ENCODE measurements at regions of chr19 and their contacts with region 1.

Region 1: DNA sequence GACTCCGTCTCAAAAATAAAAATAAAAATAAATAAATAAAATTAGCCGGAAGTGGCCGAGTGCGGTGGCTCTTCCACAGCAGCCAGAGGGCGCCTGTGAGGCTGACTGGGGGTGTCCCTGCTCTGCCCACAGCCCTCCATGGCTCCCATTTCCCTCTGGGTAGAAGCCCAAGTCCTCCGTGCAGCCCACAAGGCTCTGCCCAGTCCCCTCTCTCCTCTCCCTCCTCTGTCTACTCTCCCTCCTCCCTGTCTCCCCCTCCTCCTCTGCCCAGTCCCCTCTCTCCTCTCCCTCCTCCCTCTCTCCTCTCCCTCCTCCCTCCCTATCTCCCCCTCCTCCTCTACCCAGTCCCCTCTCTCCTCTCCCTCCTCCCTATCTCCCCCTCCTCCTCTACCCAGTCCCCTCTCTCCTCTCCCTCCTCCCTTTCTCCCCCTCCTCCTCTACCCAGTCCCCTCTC is 20.4 kb downstream of the MISP start:
- DNase-seq: peak; percentile 49 to 69 (median 51)
- H3K4me3 ChIP-seq: no peak overlapping the region
- H3K4me3 Mint-ChIP-seq: no peak overlapping the region
- H3K27ac ChIP-seq: no peak overlapping the region
- H3K27ac Mint-ChIP-seq: no peak overlapping the region
- H3K4me1 ChIP-seq: peaks cover 0 to 3% of the 10 kb centered on the region in 2 donors
- H3K4me1 Mint-ChIP-seq: peaks cover 4% of the 10 kb centered on the region
- H3K27me3 ChIP-seq: no peaks in the 10 kb centered on the region
- H3K27me3 Mint-ChIP-seq: peaks cover 4 to 15% (median 14%) of the 10 kb centered on the region in 3 donors
- CTCF ChIP-seq: peak; percentile 68

Region 2: DNA sequence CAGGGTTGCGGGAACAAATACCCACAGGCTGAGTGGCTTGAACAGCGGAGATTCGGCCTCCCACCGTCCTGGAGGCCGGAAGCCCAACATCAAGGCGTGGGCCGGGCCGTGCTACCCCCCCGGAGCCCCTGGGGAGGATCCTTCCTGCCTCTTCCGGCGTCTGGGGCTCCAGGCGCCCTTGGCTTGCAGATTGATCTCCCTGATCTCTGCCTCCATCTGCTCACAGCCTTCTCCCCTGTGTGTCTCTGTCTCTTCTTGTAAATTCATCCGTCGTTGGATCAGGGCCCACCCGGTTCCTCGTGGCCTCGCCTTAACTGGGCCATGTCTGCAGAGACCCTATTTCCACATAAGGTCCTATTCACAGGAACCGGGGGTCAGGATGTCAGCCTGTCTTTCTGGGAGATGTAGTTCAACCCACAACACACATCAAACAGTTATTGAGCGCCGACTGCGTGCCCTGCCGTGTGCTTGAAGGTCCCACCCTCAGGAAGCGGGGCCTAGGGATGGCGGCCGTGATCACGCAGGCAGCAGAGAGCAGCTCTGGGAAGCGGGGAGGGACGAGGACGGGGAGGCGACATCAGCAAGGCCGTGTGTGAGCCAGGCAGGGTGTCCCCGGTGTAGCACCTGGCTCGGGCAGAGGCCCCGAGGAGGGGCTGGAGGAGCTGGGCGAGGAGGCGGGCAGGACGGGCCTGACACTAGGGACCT is 160.4 kb before region 1 on chr19:
- intact Hi-C with region 1: no loop called
- DNase-seq: no peak
- H3K4me3 ChIP-seq: peak overlapping the region; percentile 7 to 59 (median 36)
- H3K4me3 Mint-ChIP-seq: peak overlapping the region; percentile 67 to 84
- H3K27ac ChIP-seq: no peak overlapping the region
- H3K27ac Mint-ChIP-seq: peak overlapping the region in 3 of 7 donors; percentile 58 to 85 (median 84)
- H3K4me1 ChIP-seq: peaks cover 30 to 37% of the 10 kb centered on the region in 2 donors
- H3K4me1 Mint-ChIP-seq: peaks cover 21% of the 10 kb centered on the region
- H3K27me3 ChIP-seq: peaks cover 0 to 34% of the 10 kb centered on the region in 2 donors
- H3K27me3 Mint-ChIP-seq: peaks cover 25 to 58% (median 26%) of the 10 kb centered on the region in 3 donors
- CTCF ChIP-seq: no peak

Region 3: GRCh38 chr19:850221-850978 is 79.0 kb after region 1 on chr19:
- intact Hi-C with region 1: loop called in 1 of 2 experiments (anchors 5 kb)
- DNase-seq: peak in 2 of 3 donors; percentile 47 to 49
- H3K4me3 ChIP-seq: peak overlapping the region in 2 of 3 experiments; percentile 7 to 60
- H3K4me3 Mint-ChIP-seq: peak overlapping the region; percentile 52 to 59
- H3K27ac ChIP-seq: no peak overlapping the region
- H3K27ac Mint-ChIP-seq: peak overlapping the region in 2 of 7 donors; percentile 75 to 82
- H3K4me1 ChIP-seq: peaks cover 38 to 54% of the 10 kb centered on the region in 2 donors
- H3K4me1 Mint-ChIP-seq: peaks cover 50% of the 10 kb centered on the region
- H3K27me3 ChIP-seq: peaks cover 0 to 22% of the 10 kb centered on the region in 2 donors
- H3K27me3 Mint-ChIP-seq: peaks cover 20 to 43% (median 31%) of the 10 kb centered on the region in 3 donors
- CTCF ChIP-seq: no peak

Region 4: GRCh38 chr19:920051-920864 is 148.9 kb after region 1 on chr19:
- intact Hi-C with region 1: loop called (anchors 2 kb)
- DNase-seq: peak in 2 of 3 donors; percentile 28 to 38
- H3K4me3 ChIP-seq: peak overlapping the region in 1 of 3 experiments; percentile 55
- H3K4me3 Mint-ChIP-seq: peak overlapping the region; percentile 39 to 86
- H3K27ac ChIP-seq: no peak overlapping the region
- H3K27ac Mint-ChIP-seq: no peak overlapping the region
- H3K4me1 ChIP-seq: peaks cover 48 to 61% of the 10 kb centered on the region in 2 donors
- H3K4me1 Mint-ChIP-seq: peaks cover 30% of the 10 kb centered on the region
- H3K27me3 ChIP-seq: peaks cover 23 to 47% of the 10 kb centered on the region in 2 donors
- H3K27me3 Mint-ChIP-seq: peaks cover 45 to 62% (median 56%) of the 10 kb centered on the region in 3 donors
- CTCF ChIP-seq: no peak

Region 5: GRCh38 chr19:984165-984967 is 213.0 kb after region 1 on chr19 and contains the start of gene WDR18:
- intact Hi-C with region 1: loop called (anchors 5 to 10 kb)
- DNase-seq: peak; percentile 84 to 90 (median 86)
- H3K4me3 ChIP-seq: peak within 1 kb of the TSS; percentile 82 to 96 (median 85)
- H3K4me3 Mint-ChIP-seq: peak within 1 kb of the TSS; percentile 88 to 90
- H3K27ac ChIP-seq: peak within 1 kb of the TSS; percentile 7 to 71
- H3K27ac Mint-ChIP-seq: peak within 1 kb of the TSS; percentile 59 to 91 (median 77)
- H3K4me1 ChIP-seq: peaks cover 18 to 28% of the 10 kb centered on the region in 2 donors
- H3K4me1 Mint-ChIP-seq: peaks cover 17% of the 10 kb centered on the region
- H3K27me3 ChIP-seq: no peaks in the 10 kb centered on the region
- H3K27me3 Mint-ChIP-seq: peaks cover 0 to 4% (median 1%) of the 10 kb centered on the region in 3 donors
- CTCF ChIP-seq: no peak
- polyA plus RNA-seq, gene WDR18: 21.3 to 52.7 (median 49.9) TPM

Measured in CD14-positive monocyte (primary cell).